Posterior cingulate gyrus (tissue), 11 donors: ENCODE measurements at regions of chr15 and their contacts with region 1.

Region 1: DNA sequence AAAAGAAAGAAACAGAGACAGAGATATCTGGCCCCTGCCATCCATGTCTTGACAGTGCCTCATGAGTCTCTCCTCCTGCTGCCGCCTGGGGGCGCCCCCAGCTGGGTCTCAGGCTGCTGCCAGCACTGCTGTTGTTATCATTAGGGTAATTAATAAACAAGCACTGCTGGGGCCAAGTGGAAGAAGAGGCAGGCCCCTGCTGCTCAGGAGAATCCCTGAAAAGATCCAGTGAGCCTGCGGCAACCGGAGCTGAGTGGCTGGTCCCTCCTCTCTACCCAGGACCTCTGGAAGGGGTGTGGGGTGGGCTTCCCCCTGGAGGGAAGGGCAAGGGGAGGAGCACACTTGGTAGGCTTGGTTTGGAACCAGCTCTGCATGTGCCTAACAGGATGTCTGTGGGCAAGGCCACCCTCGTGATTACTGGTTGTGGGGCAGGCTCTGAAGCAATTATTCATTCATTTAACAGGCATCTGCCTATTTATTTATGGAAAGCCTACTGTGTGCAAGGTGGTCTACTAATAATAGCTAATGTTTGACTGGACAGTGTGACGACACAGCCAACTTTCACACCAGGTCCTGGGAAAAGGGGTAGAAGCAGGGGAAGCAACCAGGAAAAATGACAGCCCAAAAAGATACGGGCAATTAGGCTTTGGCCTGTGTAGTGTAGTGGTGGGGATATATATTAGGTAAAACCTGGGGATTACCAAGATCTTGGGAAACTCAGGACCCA is 1.2 kb upstream of the TYRO3 start:
- DNase-seq: peak; percentile 75 to 98 (median 82)

Region 2: DNA sequence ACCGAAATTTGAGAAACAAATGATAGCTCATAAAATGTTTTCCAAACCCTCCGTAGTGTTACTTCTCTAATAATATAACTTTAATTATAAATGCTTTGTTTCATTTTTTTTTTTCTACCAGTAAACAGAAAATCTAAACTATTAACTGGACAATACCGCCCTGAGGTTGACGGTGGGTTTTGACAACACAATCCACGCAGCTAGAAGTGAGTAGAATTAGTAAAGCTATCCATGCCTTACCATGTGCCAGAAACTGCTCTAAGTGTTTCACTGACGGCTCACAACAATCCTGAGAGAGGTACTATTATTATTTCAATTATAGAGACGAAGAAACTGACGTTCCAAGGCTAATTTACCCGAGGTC is 155.9 kb before region 1 on chr15:
- intact Hi-C with region 1: no loop called
- DNase-seq: no peak

Region 3: DNA sequence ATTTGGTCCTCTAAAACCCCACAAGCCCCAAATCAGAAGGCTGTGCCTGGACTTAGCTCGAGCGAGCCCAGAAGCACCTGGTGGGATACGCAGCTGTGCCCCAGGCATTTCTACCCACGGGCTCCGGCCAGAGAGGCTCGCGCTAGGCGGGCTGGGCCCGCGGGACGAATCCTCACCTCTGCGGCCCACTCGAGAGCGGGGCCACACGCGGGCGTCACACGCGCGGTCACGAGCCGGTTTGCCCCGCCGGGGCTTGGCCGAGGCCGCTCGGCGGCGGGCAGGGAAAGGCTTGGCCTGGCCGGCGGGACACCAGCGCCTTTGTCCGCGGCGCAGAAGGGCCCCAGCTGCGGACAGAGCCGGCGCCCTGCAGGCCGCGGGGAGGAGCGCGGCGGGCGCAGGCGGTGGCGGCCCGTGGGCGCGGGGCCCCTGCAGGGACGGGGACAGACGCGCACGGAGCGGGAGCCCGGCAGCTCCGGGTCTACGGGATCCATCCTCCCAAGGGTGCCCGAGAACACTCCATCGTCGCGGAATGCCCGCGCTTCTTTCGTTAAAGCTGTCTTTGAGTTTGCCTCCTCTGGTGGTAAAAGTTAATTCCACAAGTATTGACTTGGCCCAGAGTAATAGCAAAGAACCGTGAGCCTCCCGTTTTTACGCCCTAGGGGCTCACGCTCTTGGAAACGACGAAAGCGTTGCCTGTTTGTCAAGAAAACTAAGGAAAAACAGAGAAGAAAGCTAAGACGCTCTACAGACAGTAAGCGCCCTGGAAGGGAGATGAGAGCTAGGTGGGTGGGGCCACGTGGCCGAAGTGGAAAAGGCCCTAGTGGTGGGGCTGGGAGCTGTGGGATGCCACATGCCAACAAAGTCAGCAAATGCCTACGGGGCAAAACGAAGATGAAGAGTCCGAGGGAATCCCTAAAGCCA is 27.6 kb after region 1 on chr15:
- intact Hi-C with region 1: loop called (anchors 1 kb)
- DNase-seq: peak in 9 of 10 donors; percentile 25 to 93 (median 62)

Region 4: DNA sequence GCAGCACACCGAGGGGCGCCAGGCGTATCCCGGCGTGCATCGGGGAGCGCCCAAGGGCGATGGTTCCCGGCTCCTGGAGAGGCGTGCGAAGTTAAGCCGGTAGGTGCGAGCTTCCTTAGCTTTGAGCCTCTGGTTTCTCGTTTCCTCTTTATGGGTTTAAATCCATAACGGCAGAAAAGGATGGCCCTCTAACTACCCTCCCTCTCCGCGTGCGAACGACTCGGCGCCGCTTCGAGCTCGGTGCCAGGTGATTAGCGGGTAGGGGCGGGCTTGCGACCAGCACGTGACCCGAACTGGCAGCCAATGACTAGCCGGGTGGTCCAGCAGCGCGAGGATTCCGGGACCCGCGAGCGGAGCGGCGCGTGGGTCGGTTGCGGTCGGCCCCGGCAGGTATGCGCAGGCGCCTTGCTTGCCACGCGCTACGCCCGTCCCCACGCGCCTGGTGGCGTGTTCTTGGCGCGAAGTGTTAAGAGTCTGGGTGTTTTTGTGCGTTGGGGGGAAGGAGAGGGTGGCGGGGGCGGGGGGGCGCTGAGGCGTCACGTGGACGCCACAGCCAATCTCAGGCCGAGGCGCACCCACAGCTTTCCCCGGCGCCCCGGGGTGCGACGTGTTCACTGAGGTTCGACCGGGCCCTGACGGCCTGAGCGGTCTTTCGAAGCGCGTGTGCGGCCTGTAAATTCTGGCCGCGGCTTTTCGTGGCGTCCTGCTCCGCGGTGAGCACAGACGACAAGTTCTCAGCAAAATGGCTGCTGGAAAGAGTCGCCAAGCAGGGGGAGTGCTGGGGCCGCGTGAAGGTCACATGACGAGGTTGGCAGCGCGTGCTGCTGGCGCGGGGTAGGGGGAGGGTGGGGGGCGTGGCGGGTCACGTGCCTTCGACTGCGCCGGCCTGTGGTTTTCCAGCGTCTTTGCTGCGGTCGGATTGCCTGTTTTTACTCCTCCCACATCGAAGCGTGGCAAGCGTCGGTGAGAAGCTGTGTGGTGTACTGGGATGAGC is 63.7 kb after region 1 on chr15:
- intact Hi-C with region 1: loop called (anchors 5 kb)
- DNase-seq: peak; percentile 79 to 97 (median 86)

Region 5: DNA sequence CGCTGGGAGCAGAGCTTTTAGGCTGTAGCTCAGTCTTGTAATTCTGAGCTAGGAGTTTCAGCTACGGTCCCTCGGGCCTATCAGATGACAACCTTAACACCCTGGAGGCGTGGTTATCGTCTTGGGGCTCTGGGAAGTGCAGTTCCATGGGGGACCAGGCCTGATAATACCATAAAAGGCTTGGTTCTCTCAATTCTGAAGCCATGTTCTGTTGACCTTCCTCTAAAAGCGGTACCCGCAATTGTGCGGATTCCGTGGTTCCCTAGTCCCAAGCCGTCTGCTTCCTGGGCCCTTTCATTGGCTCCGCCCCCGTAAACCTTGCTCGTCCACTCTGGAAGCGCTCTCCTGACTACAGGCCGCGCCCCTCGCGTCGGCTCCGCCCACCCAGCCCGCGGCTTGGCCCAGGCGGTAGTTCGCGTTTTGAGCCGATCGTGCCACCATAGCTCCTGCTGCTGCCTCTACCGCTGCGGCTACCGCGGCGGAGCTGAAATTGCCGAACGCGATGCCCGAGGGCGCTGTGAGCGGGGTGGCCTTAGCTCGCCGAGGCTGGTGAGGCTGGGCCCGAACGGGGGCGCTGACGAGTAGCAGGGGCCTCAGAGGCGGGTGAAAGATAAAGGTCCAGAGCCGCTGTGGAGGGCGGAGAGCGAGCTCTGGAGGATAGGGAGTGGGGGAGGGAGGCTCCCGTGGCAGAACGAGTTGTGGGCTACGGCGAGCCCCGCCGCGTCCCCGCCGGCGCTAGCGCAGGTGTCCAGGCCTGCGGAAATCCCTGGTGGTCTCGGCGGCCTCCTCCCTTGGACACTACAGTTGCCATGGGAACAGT is 216.4 kb after region 1 on chr15 and contains the start of gene MAPKBP1:
- intact Hi-C with region 1: loop called (anchors 5 kb)
- DNase-seq: peak; percentile 94 to 99 (median 96)

Region 6: DNA sequence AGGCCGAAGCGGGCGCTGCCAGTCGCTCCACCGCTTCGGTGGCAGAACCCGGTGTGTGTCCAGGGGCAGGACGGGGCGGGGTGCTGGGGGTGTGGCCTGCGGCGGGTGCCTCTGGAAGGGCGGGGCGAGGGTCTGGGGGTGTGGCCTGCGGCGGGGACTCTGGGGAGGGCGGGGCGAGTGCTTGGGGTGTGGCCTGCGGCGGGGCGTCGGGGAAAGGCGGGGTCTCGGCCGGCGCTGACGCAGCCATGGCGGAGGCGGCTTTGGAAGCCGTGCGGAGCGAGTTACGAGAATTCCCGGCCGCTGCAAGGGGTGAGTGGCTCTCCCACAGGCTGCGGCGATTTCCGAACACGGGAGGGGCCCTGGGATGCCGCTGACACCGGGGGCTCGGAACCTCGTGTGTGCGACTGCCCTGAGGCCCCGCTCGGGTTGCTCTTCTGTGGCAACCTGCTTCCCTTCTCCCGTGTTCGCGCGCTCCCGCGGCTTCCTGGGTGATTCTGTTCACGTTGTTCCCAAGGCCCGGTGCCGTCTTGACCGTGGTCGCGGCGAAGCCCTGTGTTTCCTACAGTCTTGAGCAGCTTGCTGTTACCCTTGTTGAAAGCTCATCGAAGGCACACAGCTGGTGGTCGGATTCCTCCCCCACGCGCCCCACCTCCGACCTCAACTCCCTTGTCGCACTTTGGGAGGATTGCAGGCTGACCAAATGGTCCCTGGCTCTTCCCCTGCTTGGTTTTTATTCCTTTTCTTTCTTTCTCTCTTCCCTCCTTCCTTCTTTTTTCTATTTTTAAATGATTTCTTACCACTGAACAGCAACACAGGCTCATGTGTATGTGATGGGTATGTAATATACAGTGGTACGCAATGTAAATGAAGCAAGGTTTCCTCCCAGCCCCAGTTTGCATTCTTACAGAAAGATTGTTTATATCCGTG is 270.3 kb after region 1 on chr15 and contains the start of gene JMJD7:
- intact Hi-C with region 1: loop called (anchors 5 kb)
- DNase-seq: peak; percentile 88 to 99 (median 96)